ENCODE measurements at regions of chr2 and their contacts with region 1.

Region 1: DNA sequence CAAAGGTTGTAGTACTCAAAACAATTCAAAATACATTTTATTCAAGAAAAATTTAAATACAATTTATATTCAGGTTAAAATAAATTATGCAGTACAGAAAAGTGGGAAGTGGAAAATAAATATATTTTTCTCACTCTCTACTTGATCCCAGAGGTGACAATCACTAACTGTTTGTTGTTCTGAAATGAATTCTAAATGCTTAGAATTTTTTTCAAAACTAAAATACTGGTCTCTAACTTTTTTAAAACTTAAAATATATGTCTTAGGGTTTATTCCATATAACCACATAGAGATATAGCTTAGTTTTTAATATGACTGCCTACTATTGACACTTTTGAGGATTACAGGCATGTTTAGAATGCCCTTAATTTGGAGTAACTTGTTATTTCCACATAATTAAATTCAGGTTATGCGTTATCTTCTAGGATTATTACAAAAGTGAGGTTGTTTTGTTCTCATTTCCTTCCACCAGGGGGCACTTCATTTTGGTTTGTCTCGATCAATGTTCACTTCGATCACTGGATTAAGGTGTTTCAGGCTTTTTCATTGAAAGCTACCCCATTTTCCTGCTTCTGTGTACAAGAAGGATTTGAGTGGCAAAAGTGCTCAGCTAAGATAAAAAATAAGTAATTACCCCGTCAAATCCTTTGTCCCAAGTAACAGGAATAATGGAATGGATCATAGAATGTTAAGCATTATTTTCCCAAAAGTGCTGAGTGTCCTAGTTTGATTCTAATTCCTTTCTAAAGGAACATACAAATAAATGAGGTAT is 27.1 kb upstream of the TFPI start:
- DNase-seq: peak; percentile 8
- H3K4me3 ChIP-seq: peak overlapping the region in 1 of 2 experiments; percentile 45; a peak in 2 of 4 replicates
- H3K27ac ChIP-seq: peak overlapping the region in 1 of 2 experiments; percentile 35; a peak in 2 of 4 replicates
- H3K4me1 ChIP-seq: peaks cover 0 to 3% of the 10 kb centered on the region in 2 experiments; a peak in 3 of 4 replicates
- H3K27me3 ChIP-seq: no peaks in the 10 kb centered on the region
- CTCF ChIP-seq: peak; percentile 79
- EP300 ChIP-seq: no peak
- RAD21 ChIP-seq: peak; percentile 66

Region 2: DNA sequence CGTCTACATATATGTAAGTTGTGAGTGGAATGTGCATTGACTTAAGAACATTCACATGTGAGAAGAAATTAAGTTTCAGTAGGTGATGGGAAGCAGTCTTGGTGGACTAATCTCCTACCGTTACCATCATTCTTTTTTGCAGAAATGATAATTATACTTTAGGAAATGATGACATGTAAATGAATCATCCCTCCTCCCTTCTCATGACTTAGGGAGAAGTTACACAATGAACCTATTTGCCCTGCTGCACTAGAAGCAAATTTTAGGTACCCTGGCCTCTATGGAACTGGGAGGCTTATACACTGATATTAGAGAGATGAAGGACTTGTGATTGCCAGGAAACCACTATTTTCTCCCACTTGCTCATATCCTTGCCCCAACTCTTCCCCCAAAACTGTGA is 347.5 kb before region 1 on chr2:
- CTCF ChIA-PET with region 1: no interaction called
- POLR2A ChIA-PET with region 1: no interaction called
- DNase-seq: no peak
- H3K4me3 ChIP-seq: no peak overlapping the region
- H3K27ac ChIP-seq: no peak overlapping the region
- H3K4me1 ChIP-seq: no peaks in the 10 kb centered on the region; a peak in 1 of 4 replicates
- H3K27me3 ChIP-seq: no peaks in the 10 kb centered on the region
- CTCF ChIP-seq: no peak
- EP300 ChIP-seq: no peak
- RAD21 ChIP-seq: no peak

Region 3: GRCh38 chr2:187493877-187494568 is 87.3 kb before region 1 on chr2:
- CTCF ChIA-PET with region 1: interaction called, 335 read pairs
- POLR2A ChIA-PET with region 1: no interaction called
- DNase-seq: no peak
- H3K4me3 ChIP-seq: no peak overlapping the region
- H3K27ac ChIP-seq: no peak overlapping the region
- H3K4me1 ChIP-seq: no peaks in the 10 kb centered on the region
- H3K27me3 ChIP-seq: no peaks in the 10 kb centered on the region
- CTCF ChIP-seq: no peak
- EP300 ChIP-seq: no peak
- RAD21 ChIP-seq: no peak

Region 4: GRCh38 chr2:187567126-187567525 is 14.2 kb before region 1 on chr2:
- CTCF ChIA-PET with region 1: interaction called, 16 read pairs
- POLR2A ChIA-PET with region 1: no interaction called
- DNase-seq: no peak
- H3K4me3 ChIP-seq: no peak overlapping the region
- H3K27ac ChIP-seq: no peak overlapping the region
- H3K4me1 ChIP-seq: peaks cover 0 to 2% of the 10 kb centered on the region in 2 experiments; a peak in 2 of 4 replicates
- H3K27me3 ChIP-seq: no peaks in the 10 kb centered on the region
- CTCF ChIP-seq: no peak
- EP300 ChIP-seq: no peak
- RAD21 ChIP-seq: no peak

Region 5: DNA sequence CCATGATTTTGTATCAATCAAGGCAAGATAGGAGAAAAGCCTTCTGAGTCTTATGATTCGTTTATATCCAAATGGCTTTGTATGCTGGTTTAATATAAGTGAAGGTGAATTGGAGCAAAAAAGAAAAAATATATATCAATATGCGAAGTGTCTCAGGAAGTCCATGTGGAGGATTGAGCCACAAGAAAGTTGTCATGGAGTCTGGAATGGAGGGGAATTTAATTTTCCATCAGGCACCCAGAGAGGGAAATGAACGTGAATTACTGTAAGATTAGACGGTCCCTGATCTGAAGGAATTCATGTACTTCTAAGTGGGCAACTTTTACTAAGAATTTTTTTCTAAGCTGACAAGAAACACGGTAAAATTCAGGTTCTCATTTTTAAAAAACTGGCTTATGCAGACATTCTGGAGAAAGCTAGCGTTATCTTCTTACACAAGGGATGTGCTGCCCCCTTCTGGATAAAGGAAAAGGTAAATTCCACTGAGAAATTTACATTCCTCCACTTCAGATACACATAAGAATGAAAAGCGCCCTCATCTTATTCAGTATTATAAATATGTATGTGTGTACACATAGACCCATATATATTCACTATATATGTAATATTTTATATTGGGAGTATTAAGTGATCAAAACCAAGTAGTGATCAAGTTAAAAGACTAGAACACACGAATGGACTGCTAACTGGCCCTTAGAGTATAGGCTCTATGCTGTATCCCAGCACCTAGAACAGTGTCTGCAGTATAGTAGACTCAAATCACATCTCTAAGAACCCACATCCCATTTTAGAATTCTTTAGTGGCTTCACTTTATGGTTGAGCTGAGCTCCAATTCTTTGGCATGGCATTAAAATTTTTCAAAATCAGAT is 261.9 kb after region 1 on chr2:
- CTCF ChIA-PET with region 1: interaction called, 33 read pairs
- POLR2A ChIA-PET with region 1: no interaction called
- DNase-seq: peak; percentile 15
- H3K4me3 ChIP-seq: no peak overlapping the region; a peak in 1 of 4 replicates
- H3K27ac ChIP-seq: no peak overlapping the region
- H3K4me1 ChIP-seq: no peaks in the 10 kb centered on the region
- H3K27me3 ChIP-seq: no peaks in the 10 kb centered on the region
- CTCF ChIP-seq: peak; percentile 81
- EP300 ChIP-seq: no peak
- RAD21 ChIP-seq: peak; percentile 77

Region 6: GRCh38 chr2:187934692-187935091 is 353.4 kb after region 1 on chr2:
- CTCF ChIA-PET with region 1: no interaction called
- POLR2A ChIA-PET with region 1: no interaction called
- DNase-seq: no peak
- H3K4me3 ChIP-seq: no peak overlapping the region
- H3K27ac ChIP-seq: no peak overlapping the region
- H3K4me1 ChIP-seq: no peaks in the 10 kb centered on the region
- H3K27me3 ChIP-seq: no peaks in the 10 kb centered on the region
- CTCF ChIP-seq: no peak
- EP300 ChIP-seq: no peak
- RAD21 ChIP-seq: no peak

Region 7: GRCh38 chr2:188524519-188525113 is 943.3 kb after region 1 on chr2:
- CTCF ChIA-PET with region 1: interaction called, 16 read pairs
- POLR2A ChIA-PET with region 1: no interaction called
- DNase-seq: peak; percentile 28
- H3K4me3 ChIP-seq: no peak overlapping the region
- H3K27ac ChIP-seq: peak overlapping the region; percentile 46 to 71
- H3K4me1 ChIP-seq: peaks cover 21 to 28% of the 10 kb centered on the region in 2 experiments; a peak in 2 of 4 replicates
- H3K27me3 ChIP-seq: no peaks in the 10 kb centered on the region
- CTCF ChIP-seq: peak; percentile 82
- EP300 ChIP-seq: no peak
- RAD21 ChIP-seq: peak; percentile 84

Measured in SK-N-SH (cell line).